Activated CD4-positive, alpha-beta memory T cell treated with anti-CD3 and anti-CD28 coated beads for 36 hours (primary cell): ENCODE measurements at regions of chr22 and their contacts with region 1.

Region 1: DNA sequence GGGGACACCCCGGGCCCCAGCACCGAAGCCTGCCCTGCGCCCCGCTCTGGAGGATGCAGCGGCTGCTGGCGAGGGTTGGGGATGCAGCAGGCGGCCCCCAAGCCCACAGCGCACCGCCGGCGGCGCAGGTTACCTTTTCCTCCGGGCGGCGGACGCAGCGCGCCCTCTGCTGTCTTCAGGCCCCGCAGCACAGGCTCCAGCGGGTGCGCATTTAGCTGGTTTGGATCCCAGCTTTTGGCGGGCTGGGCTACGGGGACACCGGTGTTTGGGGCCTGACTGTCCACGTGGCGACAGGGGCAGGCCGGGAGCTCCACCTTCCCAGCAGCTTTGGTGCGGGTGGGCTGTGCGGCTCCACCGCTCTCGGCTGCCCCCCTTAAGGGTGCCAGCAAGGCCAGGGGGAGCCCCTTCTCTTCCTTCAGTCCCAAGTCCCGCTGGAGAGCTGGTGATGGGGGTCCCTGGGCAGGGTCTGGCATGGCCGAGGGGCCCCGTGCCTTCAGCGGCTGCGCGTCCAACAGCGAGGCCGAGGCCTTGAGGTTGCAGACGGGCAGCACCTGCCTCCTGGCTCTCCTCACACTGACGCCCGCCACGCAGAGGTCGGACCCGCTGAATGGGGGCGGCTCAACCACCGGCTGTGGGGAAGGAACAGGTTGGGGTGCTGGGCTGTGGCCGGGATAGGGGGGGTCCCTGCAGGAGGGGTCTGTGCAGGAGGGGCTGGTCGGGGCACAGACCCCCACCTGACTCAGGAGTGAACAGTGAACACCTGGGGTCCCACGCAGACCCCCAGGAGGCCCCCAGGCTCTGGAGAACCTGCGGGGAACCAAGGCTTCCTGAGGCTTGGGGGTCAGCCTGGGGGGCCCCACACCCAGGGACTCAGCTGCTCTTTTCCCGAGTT is 18.0 kb upstream of the IL17REL start:
- DNase-seq: peak; percentile 94
- H3K4me3 Mint-ChIP-seq: no peak overlapping the region
- H3K27ac Mint-ChIP-seq: no peak overlapping the region
- H3K4me1 Mint-ChIP-seq: peaks cover 25% of the 10 kb centered on the region
- H3K27me3 Mint-ChIP-seq: peaks cover 16% of the 10 kb centered on the region

Region 2: DNA sequence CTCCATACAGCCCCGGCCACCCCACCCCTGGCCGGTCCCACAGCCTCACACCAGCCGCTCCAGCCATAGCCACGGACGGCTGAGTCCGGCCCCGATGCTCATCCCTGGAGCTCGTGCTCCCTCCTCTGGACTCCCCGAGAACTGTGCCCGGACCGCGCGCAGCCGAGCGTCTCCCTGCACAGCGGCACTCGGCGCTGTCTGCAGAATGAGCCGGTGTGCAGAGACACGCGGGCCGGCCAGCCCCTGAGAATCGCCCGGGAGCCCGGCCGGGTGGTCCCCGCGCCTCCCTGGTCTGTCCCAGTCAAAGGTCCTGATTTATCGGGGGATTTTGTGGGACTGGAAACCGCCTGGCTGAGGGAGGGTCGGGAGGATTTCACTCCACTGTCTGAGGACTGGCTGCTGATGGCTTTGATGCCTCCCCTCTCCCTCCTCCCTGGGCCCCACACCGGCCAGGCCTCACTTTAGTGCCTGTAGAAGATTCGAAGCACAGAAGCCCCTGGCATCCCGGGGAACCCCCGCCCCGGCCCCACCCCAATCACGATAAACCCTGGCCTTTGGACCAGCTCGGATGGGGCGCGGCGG is 305.6 kb before region 1 on chr22:
- CTCF ChIA-PET with region 1: no interaction called
- POLR2A ChIA-PET with region 1: no interaction called
- intact Hi-C with region 1: no loop called
- DNase-seq: peak; percentile 84
- H3K4me3 Mint-ChIP-seq: peak overlapping the region; percentile 57
- H3K27ac Mint-ChIP-seq: peak overlapping the region; percentile 28
- H3K4me1 Mint-ChIP-seq: peaks cover 12% of the 10 kb centered on the region
- H3K27me3 Mint-ChIP-seq: peaks cover 26% of the 10 kb centered on the region

Region 3: GRCh38 chr22:49767355-49768062 is 263.0 kb before region 1 on chr22:
- CTCF ChIA-PET with region 1: interaction called, 35 read pairs
- POLR2A ChIA-PET with region 1: interaction called, 3 read pairs
- intact Hi-C with region 1: loop called (anchors 1 kb)
- DNase-seq: peak; percentile 53
- H3K4me3 Mint-ChIP-seq: no peak overlapping the region
- H3K27ac Mint-ChIP-seq: peak overlapping the region; percentile 2
- H3K4me1 Mint-ChIP-seq: peaks cover 9% of the 10 kb centered on the region
- H3K27me3 Mint-ChIP-seq: no peaks in the 10 kb centered on the region

Region 4: GRCh38 chr22:49925525-49926128 is 104.9 kb before region 1 on chr22:
- CTCF ChIA-PET with region 1: interaction called, 95 read pairs
- POLR2A ChIA-PET with region 1: interaction called, 3 read pairs
- intact Hi-C with region 1: loop called (anchors 1 kb)
- DNase-seq: peak; percentile 77
- H3K4me3 Mint-ChIP-seq: peak overlapping the region; percentile 68
- H3K27ac Mint-ChIP-seq: peak overlapping the region; percentile 88
- H3K4me1 Mint-ChIP-seq: peaks cover 28% of the 10 kb centered on the region
- H3K27me3 Mint-ChIP-seq: no peaks in the 10 kb centered on the region

Region 5: DNA sequence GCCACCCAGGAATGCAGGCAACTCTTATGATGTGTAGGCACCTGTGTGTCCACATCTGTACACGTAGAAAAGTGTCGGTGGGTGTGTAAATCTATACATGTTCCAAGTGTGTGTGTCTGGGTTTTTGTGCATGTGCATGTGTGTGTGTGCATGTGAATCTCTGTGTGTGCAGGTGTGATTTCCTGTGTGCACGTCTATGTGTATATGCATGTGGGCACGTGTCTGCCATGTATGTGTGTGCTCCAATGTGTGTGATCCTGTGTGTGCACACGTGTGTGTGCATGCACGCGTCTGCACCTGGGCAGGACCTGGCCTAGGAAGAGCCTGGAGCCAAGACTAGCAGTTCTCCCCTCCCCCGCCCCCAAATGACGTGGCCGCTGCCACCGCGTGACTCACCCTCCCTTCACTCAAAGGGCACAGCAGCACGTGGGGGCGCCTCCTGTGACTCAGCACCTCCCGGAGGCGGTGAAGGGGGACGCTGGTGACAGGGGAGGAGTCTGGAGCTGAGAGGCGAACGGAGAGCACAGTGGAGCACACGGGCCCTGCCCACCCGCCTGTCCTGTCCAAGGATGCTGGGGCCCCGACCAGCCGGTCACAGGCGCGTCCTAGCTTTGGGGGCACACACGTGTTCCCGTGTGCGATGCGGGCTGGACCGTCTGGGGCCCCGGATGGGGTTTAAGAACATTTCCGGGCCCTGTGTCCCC is 59.9 kb before region 1 on chr22:
- CTCF ChIA-PET with region 1: interaction called, 12 read pairs
- POLR2A ChIA-PET with region 1: no interaction called
- intact Hi-C with region 1: no loop called
- DNase-seq: peak; percentile 99
- H3K4me3 Mint-ChIP-seq: peak overlapping the region; percentile 80
- H3K27ac Mint-ChIP-seq: peak overlapping the region; percentile 93
- H3K4me1 Mint-ChIP-seq: peaks cover 34% of the 10 kb centered on the region
- H3K27me3 Mint-ChIP-seq: no peaks in the 10 kb centered on the region

Region 6: GRCh38 chr22:49992921-49993648 is 37.5 kb before region 1 on chr22:
- CTCF ChIA-PET with region 1: interaction called, 119 read pairs
- POLR2A ChIA-PET with region 1: interaction called, 3 read pairs
- intact Hi-C with region 1: loop called (anchors 1 kb)
- DNase-seq: peak; percentile 83
- H3K4me3 Mint-ChIP-seq: no peak overlapping the region
- H3K27ac Mint-ChIP-seq: peak overlapping the region; percentile 6
- H3K4me1 Mint-ChIP-seq: peaks cover 4% of the 10 kb centered on the region
- H3K27me3 Mint-ChIP-seq: no peaks in the 10 kb centered on the region

Region 7: DNA sequence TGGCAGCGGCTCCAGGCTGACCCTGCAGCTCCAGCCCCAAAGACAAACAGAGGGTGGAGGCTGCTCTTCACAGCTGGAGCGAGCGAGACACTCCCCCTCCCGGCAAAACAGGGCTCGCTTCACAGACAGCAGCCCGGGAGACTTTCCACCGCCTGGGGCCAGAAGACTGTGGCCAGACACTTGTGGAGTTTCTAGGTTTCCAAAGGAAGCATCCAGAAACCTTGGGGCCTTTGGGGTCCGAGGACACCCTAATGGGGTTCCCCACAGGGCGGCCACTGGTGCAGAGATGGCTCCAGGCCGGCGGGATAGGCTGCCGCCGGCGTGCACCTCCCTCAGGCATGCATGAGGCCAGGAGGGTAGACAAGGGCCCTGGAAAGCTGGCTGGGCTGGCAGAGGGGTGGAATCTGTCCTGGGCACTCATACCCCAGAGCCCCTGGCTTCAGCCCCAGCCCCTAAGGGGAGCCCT is 17.8 kb before region 1 on chr22 and contains the start of gene IL17REL:
- CTCF ChIA-PET with region 1: interaction called, 36 read pairs
- POLR2A ChIA-PET with region 1: interaction called, 11 read pairs
- intact Hi-C with region 1: no loop called
- DNase-seq: no peak
- H3K4me3 Mint-ChIP-seq: peak within 1 kb of the TSS; percentile 68
- H3K27ac Mint-ChIP-seq: peak within 1 kb of the TSS; percentile 62
- H3K4me1 Mint-ChIP-seq: peaks cover 18% of the 10 kb centered on the region
- H3K27me3 Mint-ChIP-seq: peaks cover 3% of the 10 kb centered on the region
- total RNA-seq, gene IL17REL: 0.73 to 1.1 TPM

Region 8: DNA sequence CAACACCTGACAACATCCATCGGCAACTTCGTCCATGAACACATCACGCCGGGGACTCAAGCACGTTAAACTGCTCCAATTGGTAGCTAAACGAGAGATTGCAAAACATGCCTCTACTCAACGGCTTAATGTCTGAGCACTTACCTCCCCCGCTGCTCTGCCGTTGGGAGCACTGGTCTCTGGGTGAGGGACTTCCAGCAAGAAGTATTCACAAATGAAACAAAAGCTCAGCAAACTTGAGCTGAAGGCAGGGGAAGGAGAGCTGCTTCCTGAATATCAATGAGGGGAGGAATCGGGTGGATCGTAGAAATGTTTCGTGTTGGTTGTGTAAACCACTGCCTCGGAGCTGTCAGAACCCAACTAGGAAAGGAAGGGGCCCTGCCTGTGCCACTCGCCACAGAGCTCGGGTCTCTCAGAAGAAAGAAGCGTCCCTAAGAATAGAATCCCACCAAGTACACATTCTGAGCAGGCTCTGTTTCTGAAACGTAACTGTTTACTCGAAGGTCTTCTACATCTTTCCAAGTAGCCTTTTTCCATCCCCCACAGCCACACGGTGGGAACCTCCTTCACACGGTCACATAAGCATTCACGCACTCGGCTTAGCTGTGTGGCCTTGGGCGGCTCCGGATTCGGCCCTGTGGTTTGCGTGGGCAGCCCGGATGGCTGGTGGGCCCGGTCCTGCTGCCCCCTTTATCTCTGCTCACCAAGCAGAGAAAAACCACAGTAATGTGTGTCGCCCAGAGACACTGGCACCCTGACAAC is 54.8 kb after region 1 on chr22 and contains the start of gene MLC1:
- CTCF ChIA-PET with region 1: interaction called, 10 read pairs
- POLR2A ChIA-PET with region 1: no interaction called
- intact Hi-C with region 1: no loop called
- DNase-seq: peak; percentile 13
- H3K4me3 Mint-ChIP-seq: peak within 1 kb of the TSS; percentile 0
- H3K27ac Mint-ChIP-seq: no peak within 1 kb of the TSS
- H3K4me1 Mint-ChIP-seq: peaks cover 13% of the 10 kb centered on the region
- H3K27me3 Mint-ChIP-seq: peaks cover 24% of the 10 kb centered on the region
- total RNA-seq, gene MLC1: not detected